Right cardiac atrium (tissue), 5 donors: ENCODE measurements at regions of chr21 and their contacts with region 1.

Region 1: DNA sequence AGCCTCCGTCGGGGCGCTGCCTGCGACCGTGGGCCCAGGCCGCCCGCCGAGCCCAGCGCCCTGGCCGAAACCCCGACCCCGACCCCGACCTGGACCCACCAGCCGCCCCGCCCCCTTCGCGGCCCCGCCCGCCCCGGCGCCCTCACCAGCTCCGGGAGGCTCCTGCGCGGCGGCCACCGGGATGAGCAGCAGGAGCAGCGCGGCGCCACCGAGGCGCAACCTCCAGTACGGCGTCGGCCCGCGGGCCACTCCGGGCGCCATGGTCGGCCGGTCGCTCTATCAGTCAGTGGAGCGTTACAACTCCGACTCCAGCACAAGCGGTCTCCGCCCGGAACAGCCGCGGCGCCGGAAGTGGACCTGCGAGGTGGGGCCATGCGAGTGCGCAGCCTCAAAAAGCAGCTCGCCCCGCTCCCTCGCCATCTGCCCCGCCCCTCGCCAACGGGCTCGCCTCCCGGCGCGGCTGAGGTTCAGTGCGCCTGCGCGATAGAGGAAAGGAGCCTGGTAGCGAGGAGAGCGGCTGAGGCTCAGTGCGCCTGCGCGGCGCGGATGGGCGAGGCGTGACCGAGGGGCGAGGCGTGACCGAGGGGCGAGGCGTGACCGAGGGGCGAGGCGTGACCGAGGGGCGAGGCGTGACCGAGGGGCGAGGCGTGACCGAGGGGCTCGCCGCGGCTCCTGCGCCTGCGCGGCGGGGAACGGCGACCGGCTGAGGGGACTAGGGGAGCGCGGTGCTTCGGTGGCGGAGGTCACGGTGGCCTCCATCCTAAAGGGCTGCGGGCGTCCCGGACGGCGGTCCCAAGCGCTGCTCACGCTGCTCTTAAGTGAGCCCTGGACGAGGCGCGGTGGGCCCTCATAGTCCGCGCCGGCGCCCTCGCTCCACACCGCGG is at the start of gene PTTG1IP:
- DNase-seq: peak; percentile 99 to 100 (median 100)
- ATAC-seq: peak; percentile 82 to 88
- H3K4me3 ChIP-seq: peak within 1 kb of the TSS; percentile 59
- H3K27ac ChIP-seq: peak within 1 kb of the TSS; percentile 78
- H3K4me1 ChIP-seq: peaks cover 8% of the 10 kb centered on the region
- H3K27me3 ChIP-seq: no peaks in the 10 kb centered on the region
- total RNA-seq, gene PTTG1IP: 192 to 206 (median 197) TPM

Region 2: GRCh38 chr21:44801468-44802395 is 71.9 kb before region 1 on chr21 and contains the start of gene UBE2G2:
- intact Hi-C with region 1: loop called in 2 of 4 experiments (anchors 5 to 10 kb)
- DNase-seq: peak; percentile 84 to 94 (median 92)
- ATAC-seq: peak; percentile 96 to 97
- H3K4me3 ChIP-seq: peak within 1 kb of the TSS; percentile 92
- H3K27ac ChIP-seq: peak within 1 kb of the TSS; percentile 32
- H3K4me1 ChIP-seq: peaks cover 3% of the 10 kb centered on the region
- H3K27me3 ChIP-seq: no peaks in the 10 kb centered on the region
- total RNA-seq, gene UBE2G2: 57.0 to 69.8 (median 64.7) TPM

Region 3: GRCh38 chr21:44817506-44817880 is 56.1 kb before region 1 on chr21:
- intact Hi-C with region 1: loop called in 2 of 4 experiments (anchors 5 kb)
- DNase-seq: peak; percentile 93 to 98 (median 96)
- ATAC-seq: peak; percentile 92 to 96
- H3K4me3 ChIP-seq: peak overlapping the region; percentile 66
- H3K27ac ChIP-seq: peak overlapping the region; percentile 93
- H3K4me1 ChIP-seq: peaks cover 9% of the 10 kb centered on the region
- H3K27me3 ChIP-seq: no peaks in the 10 kb centered on the region

Region 4: DNA sequence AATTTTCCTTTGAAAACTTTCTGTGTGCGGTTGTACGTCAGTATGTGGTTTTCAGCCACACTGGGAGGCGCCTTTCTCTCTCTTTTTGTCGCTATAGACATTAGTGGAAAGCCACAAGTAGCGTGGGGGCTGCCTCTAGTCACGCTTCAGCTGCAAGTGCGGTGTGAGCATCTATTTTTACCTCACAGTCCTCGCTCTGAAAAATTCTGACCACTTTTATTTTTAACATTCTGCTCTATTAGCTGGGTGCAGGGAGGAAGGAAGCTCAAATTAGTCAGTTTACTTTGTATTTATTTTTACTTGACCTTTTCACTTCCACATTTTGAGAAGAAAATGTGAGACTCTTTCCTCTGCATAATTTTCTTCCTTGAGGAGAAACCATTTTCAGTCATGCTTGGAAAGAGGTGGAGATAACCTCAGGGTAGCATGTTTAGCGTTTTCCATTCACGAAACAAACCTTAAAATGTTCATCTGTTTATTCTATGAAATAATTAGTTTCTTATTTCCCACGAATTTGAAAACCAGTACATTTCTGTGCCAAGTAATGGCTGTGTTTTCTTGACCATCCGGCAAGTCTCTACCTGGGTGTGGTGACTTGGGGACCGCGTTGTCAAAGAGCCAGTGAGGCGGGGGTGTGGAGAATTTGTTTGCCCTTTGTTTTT is 236.4 kb after region 1 on chr21:
- intact Hi-C with region 1: no loop called
- DNase-seq: no peak
- ATAC-seq: peak in 1 of 2 donors; percentile 37
- H3K4me3 ChIP-seq: peak overlapping the region; percentile 18
- H3K27ac ChIP-seq: no peak overlapping the region
- H3K4me1 ChIP-seq: peaks cover 13% of the 10 kb centered on the region
- H3K27me3 ChIP-seq: no peaks in the 10 kb centered on the region